Heart left ventricle (tissue), 16 donors: ENCODE measurements at regions of chr22 and their contacts with region 1.

Region 1: GRCh38 chr22:27952091-27952490 is 33.0 kb upstream of the PITPNB start:
- DNase-seq: no peak
- ATAC-seq: no peak
- H3K4me3 ChIP-seq: no peak overlapping the region
- H3K27ac ChIP-seq: no peak overlapping the region
- H3K4me1 ChIP-seq: peaks cover 0 to 14% (median 0%) of the 10 kb centered on the region in 12 donors
- H3K27me3 ChIP-seq: no peaks in the 10 kb centered on the region
- CTCF ChIP-seq: no peak
- POLR2A ChIP-seq: no peak

Region 2: GRCh38 chr22:27997538-27997937 is 45.4 kb after region 1 on chr22:
- intact Hi-C with region 1: loop called in 1 of 10 experiments (anchors 5 kb)
- DNase-seq: peak in 2 of 5 donors; percentile 6 to 11
- ATAC-seq: no peak
- H3K4me3 ChIP-seq: no peak overlapping the region
- H3K27ac ChIP-seq: no peak overlapping the region
- H3K4me1 ChIP-seq: no peaks in the 10 kb centered on the region
- H3K27me3 ChIP-seq: no peaks in the 10 kb centered on the region
- CTCF ChIP-seq: no peak
- POLR2A ChIP-seq: no peak

Region 3: GRCh38 chr22:28019881-28020871 is 68.1 kb after region 1 on chr22:
- intact Hi-C with region 1: no loop called
- DNase-seq: peak; percentile 66 to 86 (median 73)
- ATAC-seq: peak; percentile 56 to 73 (median 70)
- H3K4me3 ChIP-seq: no peak overlapping the region
- H3K27ac ChIP-seq: peak overlapping the region in 2 of 12 donors; percentile 26 to 48
- H3K4me1 ChIP-seq: peaks cover 0 to 49% (median 19%) of the 10 kb centered on the region in 12 donors
- H3K27me3 ChIP-seq: no peaks in the 10 kb centered on the region
- CTCF ChIP-seq: peak; percentile 91 to 99 (median 96)
- POLR2A ChIP-seq: no peak